Natural killer cell (primary cell): ENCODE measurements at regions of chr13 and their contacts with region 1.

Region 1: GRCh38 chr13:99335603-99336002 is 28.4 kb upstream of the GPR183 start:
- DNase-seq: no peak
- ATAC-seq: no peak
- H3K4me3 ChIP-seq: no peak overlapping the region
- H3K4me3 Mint-ChIP-seq: no peak overlapping the region
- H3K27ac ChIP-seq: no peak overlapping the region
- H3K27ac Mint-ChIP-seq: no peak overlapping the region
- H3K4me1 ChIP-seq: peaks cover 27% of the 10 kb centered on the region
- H3K4me1 Mint-ChIP-seq: peaks cover 39 to 44% of the 10 kb centered on the region in 2 donors
- H3K27me3 ChIP-seq: no peaks in the 10 kb centered on the region
- H3K27me3 Mint-ChIP-seq: peaks cover 2 to 10% of the 10 kb centered on the region in 2 donors
- CTCF ChIP-seq: no peak

Region 2: GRCh38 chr13:99103536-99103935 is 232.1 kb before region 1 on chr13:
- intact Hi-C with region 1: no loop called
- DNase-seq: no peak
- ATAC-seq: no peak
- H3K4me3 ChIP-seq: no peak overlapping the region
- H3K4me3 Mint-ChIP-seq: no peak overlapping the region
- H3K27ac ChIP-seq: no peak overlapping the region
- H3K27ac Mint-ChIP-seq: no peak overlapping the region
- H3K4me1 ChIP-seq: no peaks in the 10 kb centered on the region
- H3K4me1 Mint-ChIP-seq: no peaks in the 10 kb centered on the region
- H3K27me3 ChIP-seq: peaks cover 7% of the 10 kb centered on the region
- H3K27me3 Mint-ChIP-seq: peaks cover 22 to 51% of the 10 kb centered on the region in 2 donors
- CTCF ChIP-seq: no peak

Region 3: DNA sequence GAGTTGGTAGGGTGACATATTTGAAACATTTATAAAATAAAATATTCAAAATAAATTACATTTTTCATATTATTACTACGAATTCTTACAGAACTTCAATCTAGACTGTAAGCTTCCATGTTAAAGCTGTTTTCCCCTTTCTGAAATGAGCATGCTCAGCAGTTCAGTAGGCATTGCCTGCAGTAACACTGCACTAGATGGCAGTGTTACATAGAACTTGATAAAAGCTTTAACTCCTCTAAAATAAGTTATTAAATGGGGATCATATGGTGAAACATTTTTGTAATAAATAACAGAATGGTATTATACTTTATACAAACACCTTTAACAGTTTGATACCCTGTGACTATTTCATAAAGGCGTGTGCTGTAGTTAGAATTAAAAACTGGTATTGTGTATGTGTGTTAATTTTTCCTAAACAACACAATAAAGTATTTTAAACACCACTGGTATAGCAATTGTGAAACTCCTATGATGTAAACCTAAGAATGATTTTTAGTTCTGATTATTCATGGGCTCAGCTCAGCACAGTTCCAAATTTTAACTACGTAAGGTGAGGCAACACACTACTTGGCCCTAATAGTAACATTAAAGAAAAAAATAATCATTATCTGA is 65.9 kb before region 1 on chr13:
- intact Hi-C with region 1: no loop called
- DNase-seq: peak in 1 of 2 donors; percentile 83
- ATAC-seq: peak; percentile 49 to 70 (median 59)
- H3K4me3 ChIP-seq: no peak overlapping the region
- H3K4me3 Mint-ChIP-seq: no peak overlapping the region
- H3K27ac ChIP-seq: peak overlapping the region; percentile 91
- H3K27ac Mint-ChIP-seq: peak overlapping the region in 1 of 2 donors; percentile 85
- H3K4me1 ChIP-seq: peaks cover 23% of the 10 kb centered on the region
- H3K4me1 Mint-ChIP-seq: peaks cover 42 to 45% of the 10 kb centered on the region in 2 donors
- H3K27me3 ChIP-seq: no peaks in the 10 kb centered on the region
- H3K27me3 Mint-ChIP-seq: no peaks in the 10 kb centered on the region
- CTCF ChIP-seq: peak; percentile 85

Region 4: DNA sequence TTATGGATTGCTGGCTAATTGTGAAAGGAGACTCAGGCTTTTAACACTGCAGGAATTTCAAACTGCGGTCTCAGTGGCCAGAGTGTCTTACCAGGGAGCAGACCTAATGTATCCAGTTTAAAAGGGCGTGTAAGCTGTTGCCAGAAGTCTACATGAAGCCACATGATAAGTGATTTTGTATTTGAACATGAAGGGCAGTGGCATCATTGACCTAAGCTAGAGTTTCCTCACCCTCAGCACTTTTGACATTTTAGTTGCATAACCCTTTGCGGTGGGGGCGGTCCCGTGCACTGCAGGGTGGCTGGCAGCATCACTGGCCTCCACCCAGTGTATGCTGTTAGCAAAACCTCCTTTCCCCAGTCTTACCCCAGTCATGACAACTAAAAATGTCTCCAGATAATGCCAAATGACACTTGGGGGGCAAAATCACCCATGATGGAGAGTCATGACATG is 53.8 kb before region 1 on chr13:
- intact Hi-C with region 1: no loop called
- DNase-seq: peak; percentile 63 to 79
- ATAC-seq: peak; percentile 83 to 88 (median 87)
- H3K4me3 ChIP-seq: no peak overlapping the region
- H3K4me3 Mint-ChIP-seq: peak overlapping the region; percentile 31
- H3K27ac ChIP-seq: peak overlapping the region; percentile 88
- H3K27ac Mint-ChIP-seq: peak overlapping the region; percentile 86 to 89
- H3K4me1 ChIP-seq: peaks cover 58% of the 10 kb centered on the region
- H3K4me1 Mint-ChIP-seq: peaks cover 52 to 70% of the 10 kb centered on the region in 2 donors
- H3K27me3 ChIP-seq: no peaks in the 10 kb centered on the region
- H3K27me3 Mint-ChIP-seq: no peaks in the 10 kb centered on the region
- CTCF ChIP-seq: no peak

Region 5: DNA sequence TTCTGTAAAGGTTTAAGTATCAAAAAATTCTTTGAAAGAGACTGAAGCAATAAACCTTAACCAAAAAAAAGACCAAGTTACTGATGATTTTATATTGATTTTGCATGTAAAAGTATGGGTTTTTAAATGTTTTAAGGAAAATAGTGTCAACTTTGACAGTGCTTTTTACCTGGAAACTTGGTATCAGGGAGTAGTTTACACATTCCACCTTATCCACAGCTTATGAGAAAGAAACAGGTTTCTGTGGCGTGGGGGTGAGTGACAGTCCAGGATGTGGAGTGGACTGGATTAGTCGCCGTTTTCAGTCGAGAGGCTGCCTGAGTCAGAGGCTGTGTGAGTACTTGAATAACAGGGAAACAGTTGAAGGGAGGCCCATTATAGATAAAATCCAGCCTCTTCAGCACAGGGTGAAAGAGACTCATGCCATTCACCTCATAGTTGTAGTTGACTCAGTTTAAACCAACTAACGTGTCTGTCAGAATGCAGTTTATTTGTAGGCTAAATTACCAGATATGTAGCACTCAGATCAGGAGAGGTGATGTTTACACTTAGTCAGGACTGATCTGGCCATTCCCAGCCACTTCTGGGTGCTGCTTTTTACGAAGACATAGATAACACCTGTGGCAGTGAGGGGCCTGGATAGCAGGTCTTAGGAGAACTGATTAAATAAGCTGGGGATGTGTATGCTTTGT is 27.8 kb before region 1 on chr13:
- intact Hi-C with region 1: loop called (anchors 5 kb)
- DNase-seq: peak in 1 of 2 donors; percentile 61
- ATAC-seq: peak; percentile 52 to 74 (median 70)
- H3K4me3 ChIP-seq: peak overlapping the region; percentile 40
- H3K4me3 Mint-ChIP-seq: peak overlapping the region; percentile 50
- H3K27ac ChIP-seq: peak overlapping the region; percentile 69
- H3K27ac Mint-ChIP-seq: peak overlapping the region; percentile 61 to 64
- H3K4me1 ChIP-seq: peaks cover 33% of the 10 kb centered on the region
- H3K4me1 Mint-ChIP-seq: peaks cover 49 to 67% of the 10 kb centered on the region in 2 donors
- H3K27me3 ChIP-seq: no peaks in the 10 kb centered on the region
- H3K27me3 Mint-ChIP-seq: no peaks in the 10 kb centered on the region
- CTCF ChIP-seq: no peak

Region 6: DNA sequence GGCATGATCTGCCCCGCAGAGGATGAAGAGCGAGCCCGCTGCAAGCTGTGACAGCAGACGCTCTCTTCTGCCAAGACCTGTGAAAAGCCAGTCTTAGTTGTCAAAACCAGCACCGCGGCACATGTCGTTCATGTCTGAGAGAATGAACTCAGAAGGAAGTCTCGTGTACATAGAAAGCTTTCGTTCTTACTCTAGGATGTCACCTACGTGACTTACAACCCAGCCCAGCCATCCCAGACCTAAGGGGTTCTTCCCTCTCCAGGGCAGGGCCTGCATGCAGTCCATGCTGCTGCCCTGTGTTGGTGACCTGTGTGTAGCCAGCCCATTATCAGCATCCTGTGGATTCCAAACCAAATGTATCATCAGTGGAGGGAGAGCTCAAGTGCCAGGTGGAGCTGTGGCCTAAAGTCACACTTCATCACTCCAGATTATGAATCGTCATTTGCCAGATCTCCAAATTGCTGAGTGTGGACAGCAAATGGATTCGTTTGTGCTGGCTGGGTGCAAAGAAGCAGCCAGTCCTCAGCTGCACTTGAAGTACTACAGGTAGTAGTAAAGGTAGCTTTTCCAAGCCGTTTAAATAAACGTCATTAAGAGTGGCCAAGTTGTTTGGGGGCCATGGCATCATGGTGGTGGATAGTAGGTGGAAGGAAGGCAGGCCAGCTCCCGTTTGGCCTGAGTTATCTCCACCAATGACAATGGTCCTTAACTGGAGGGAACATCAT is 45.5 kb after region 1 on chr13:
- intact Hi-C with region 1: loop called (anchors 5 kb)
- DNase-seq: peak; percentile 55 to 80
- ATAC-seq: peak; percentile 79 to 91 (median 91)
- H3K4me3 ChIP-seq: no peak overlapping the region
- H3K4me3 Mint-ChIP-seq: peak overlapping the region; percentile 75
- H3K27ac ChIP-seq: peak overlapping the region; percentile 63
- H3K27ac Mint-ChIP-seq: peak overlapping the region; percentile 87 to 88
- H3K4me1 ChIP-seq: peaks cover 87% of the 10 kb centered on the region
- H3K4me1 Mint-ChIP-seq: peaks cover 49 to 58% of the 10 kb centered on the region in 2 donors
- H3K27me3 ChIP-seq: no peaks in the 10 kb centered on the region
- H3K27me3 Mint-ChIP-seq: peaks cover 0 to 3% of the 10 kb centered on the region in 2 donors
- CTCF ChIP-seq: no peak